ENCODE measurements at regions of chr5 and their contacts with region 1.

Region 1: GRCh38 chr5:174317259-174317894 is 271.9 kb downstream of the NSG2 start:
- DNase-seq: peak in 1 of 2 experiments; percentile 66
- H3K4me3 ChIP-seq: no peak overlapping the region
- H3K27ac ChIP-seq: no peak overlapping the region
- H3K4me1 ChIP-seq: peaks cover 0 to under 1% (median 0%) of the 10 kb centered on the region in 4 experiments; a peak in 1 of 7 replicates
- H3K27me3 ChIP-seq: peaks cover 0 to 10% (median 6%) of the 10 kb centered on the region in 4 experiments; a peak in 5 of 7 replicates
- CTCF ChIP-seq: peak; percentile 93 to 97 (median 95)
- EP300 ChIP-seq: no peak
- POLR2A ChIP-seq: no peak
- RAD21 ChIP-seq: peak; percentile 99 to 100

Region 2: DNA sequence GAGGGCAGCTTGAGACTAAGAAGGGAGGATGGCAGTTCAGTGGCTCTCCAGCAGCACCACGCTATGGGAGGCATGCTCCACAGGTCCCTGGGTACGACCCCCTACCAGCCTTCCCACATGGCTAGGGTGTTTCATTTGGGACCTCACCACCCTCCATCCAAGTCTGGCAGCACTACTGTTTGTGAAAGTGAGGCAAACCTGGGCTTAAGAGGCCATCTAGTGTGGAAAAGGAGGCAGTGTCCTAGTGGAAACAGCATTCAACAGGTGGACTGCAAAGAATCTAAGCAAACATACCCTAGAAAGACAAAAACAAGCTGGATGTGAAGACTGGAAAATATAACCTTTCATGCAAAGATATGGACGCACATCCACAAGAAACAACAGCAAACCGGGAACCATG is 333.2 kb before region 1 on chr5:
- CTCF ChIA-PET with region 1: interaction called, 28 read pairs
- POLR2A ChIA-PET with region 1: no interaction called
- DNase-seq: peak in 1 of 2 experiments; percentile 50
- H3K4me3 ChIP-seq: no peak overlapping the region
- H3K27ac ChIP-seq: no peak overlapping the region
- H3K4me1 ChIP-seq: peaks cover 4 to 8% (median 5%) of the 10 kb centered on the region in 4 experiments; a peak in 4 of 7 replicates
- H3K27me3 ChIP-seq: no peaks in the 10 kb centered on the region
- CTCF ChIP-seq: peak; percentile 8 to 87 (median 80)
- EP300 ChIP-seq: no peak
- POLR2A ChIP-seq: no peak
- RAD21 ChIP-seq: peak; percentile 96

Region 3: DNA sequence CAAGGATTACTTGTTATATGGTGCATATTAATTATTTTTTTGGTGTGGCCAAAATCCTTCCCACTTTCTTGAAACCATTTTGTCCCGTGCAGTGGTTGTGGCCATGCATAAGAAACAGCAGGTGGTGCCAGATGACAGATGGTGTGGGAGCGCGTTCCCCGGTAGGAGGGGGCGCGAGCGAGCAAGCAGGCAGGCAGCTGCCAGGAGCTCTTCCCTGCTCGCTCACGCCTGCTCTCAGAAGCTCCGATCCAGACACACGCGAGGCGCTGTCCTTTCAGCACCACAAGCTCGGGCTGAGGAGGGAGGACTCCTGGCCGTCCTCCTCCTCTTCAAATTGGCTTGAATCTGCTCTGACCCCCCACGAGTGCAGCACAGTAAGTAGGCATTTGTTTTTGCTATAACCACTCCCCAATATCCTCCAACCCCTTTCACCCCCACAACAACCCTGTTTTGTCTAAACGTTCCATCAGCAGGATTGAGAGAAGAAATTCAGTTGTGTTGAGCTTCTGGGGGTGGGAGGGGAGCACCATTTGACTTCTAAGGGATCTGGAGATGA is 271.8 kb before region 1 on chr5 and contains the start of gene NSG2:
- CTCF ChIA-PET with region 1: interaction called, 187 read pairs
- POLR2A ChIA-PET with region 1: interaction called, 9 read pairs
- DNase-seq: peak; percentile 83 to 87
- H3K4me3 ChIP-seq: no peak within 1 kb of the TSS
- H3K27ac ChIP-seq: no peak within 1 kb of the TSS
- H3K4me1 ChIP-seq: no peaks in the 10 kb centered on the region
- H3K27me3 ChIP-seq: no peaks in the 10 kb centered on the region
- CTCF ChIP-seq: peak; percentile 80 to 95 (median 81)
- EP300 ChIP-seq: no peak
- POLR2A ChIP-seq: no peak
- RAD21 ChIP-seq: peak; percentile 98 to 100
- total RNA-seq, gene NSG2: 0.34 and 0.78 TPM in 2 replicates

Region 4: GRCh38 chr5:174097518-174098185 is 219.7 kb before region 1 on chr5:
- CTCF ChIA-PET with region 1: interaction called, 19 read pairs
- POLR2A ChIA-PET with region 1: no interaction called
- DNase-seq: no peak
- H3K4me3 ChIP-seq: no peak overlapping the region
- H3K27ac ChIP-seq: no peak overlapping the region; the same call in 1 of the 2 replicates
- H3K4me1 ChIP-seq: no peaks in the 10 kb centered on the region
- H3K27me3 ChIP-seq: no peaks in the 10 kb centered on the region
- CTCF ChIP-seq: no peak
- EP300 ChIP-seq: no peak
- POLR2A ChIP-seq: no peak
- RAD21 ChIP-seq: no peak

Region 5: DNA sequence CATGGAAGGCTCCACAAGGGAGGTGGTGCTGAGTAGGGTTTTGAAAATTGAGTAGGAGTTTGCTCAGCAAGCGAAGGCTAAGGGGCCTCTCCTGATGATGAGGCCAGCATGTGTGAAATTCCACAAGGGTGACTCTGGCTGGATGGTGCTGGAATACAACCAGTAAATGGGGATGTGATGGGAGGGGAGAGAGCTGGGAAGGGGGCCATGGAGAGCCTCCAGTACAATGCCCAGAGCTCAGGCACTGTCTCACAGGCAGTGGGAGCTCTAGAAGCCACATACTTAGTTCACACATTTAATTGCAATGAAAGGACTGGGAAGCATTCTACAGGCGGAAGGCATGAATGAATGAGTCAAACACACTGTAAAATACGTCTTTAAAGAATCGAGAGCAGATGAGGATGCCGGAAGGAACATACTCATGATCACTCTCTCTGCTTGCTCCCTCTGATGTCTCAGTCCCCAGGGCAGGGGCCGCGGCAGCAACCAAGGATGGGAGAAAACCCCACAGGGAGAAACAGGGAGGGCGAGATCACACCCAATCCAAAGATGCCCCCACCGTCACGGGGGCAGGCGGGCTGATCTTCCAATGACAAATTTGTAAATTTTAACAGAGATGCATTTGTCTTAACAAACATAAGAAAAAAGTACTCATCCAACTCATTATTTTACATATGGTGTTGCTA is 10.9 kb before region 1 on chr5:
- CTCF ChIA-PET with region 1: interaction called, 22 read pairs
- POLR2A ChIA-PET with region 1: no interaction called
- DNase-seq: no peak
- H3K4me3 ChIP-seq: no peak overlapping the region
- H3K27ac ChIP-seq: no peak overlapping the region
- H3K4me1 ChIP-seq: peaks cover 0 to 7% (median 4%) of the 10 kb centered on the region in 4 experiments; a peak in 4 of 7 replicates
- H3K27me3 ChIP-seq: no peaks in the 10 kb centered on the region
- CTCF ChIP-seq: no peak
- EP300 ChIP-seq: no peak
- POLR2A ChIP-seq: no peak
- RAD21 ChIP-seq: no peak

Region 6: DNA sequence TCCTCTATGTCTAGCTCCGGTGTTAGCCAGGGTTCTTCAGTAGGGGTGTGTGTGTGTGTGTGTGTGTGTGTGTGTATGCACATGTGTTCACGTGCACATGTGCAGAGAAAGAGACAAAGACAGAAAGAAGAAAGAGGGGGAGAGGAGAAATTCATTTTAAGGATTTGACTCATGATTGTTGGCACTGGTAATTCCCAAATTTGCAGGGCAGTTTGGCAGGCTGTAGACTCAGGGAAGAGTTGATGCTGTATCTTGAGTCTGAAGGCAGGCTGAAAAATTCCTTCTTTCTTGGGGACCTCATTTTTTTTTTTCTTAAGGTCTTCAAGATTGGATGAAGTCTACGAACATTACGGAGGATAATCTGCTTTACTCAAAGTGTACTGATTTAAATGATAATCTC is 63.9 kb after region 1 on chr5:
- CTCF ChIA-PET with region 1: no interaction called
- POLR2A ChIA-PET with region 1: no interaction called
- DNase-seq: no peak
- H3K4me3 ChIP-seq: no peak overlapping the region
- H3K27ac ChIP-seq: no peak overlapping the region
- H3K4me1 ChIP-seq: peaks cover 0 to 2% (median 0%) of the 10 kb centered on the region in 4 experiments; a peak in 1 of 7 replicates
- H3K27me3 ChIP-seq: no peaks in the 10 kb centered on the region
- CTCF ChIP-seq: no peak
- EP300 ChIP-seq: no peak
- POLR2A ChIP-seq: no peak
- RAD21 ChIP-seq: no peak

Region 7: DNA sequence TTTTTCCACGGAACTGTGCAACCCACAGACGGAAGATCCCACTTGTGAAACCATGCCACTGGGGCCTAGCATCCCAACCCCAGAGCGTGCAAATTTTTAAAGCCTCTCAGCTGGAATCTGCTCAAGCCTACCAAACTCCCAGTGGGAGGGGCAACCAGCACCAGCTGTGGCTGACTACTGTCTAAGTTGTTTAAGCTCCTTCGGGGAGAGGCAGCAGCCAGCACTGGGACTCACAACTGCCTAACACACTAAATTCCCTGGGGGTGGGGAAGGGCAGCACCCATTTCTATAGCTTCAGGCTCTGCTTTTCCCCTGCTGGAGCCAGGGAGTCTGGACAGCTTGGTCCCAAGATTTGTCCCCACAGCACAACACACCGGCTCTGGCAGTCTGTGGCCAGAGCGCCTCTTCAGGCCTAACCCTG is 119.4 kb after region 1 on chr5:
- CTCF ChIA-PET with region 1: no interaction called
- POLR2A ChIA-PET with region 1: no interaction called
- DNase-seq: no peak
- H3K4me3 ChIP-seq: no peak overlapping the region
- H3K27ac ChIP-seq: no peak overlapping the region
- H3K4me1 ChIP-seq: no peaks in the 10 kb centered on the region
- H3K27me3 ChIP-seq: no peaks in the 10 kb centered on the region; a peak in 1 of 7 replicates
- CTCF ChIP-seq: no peak
- EP300 ChIP-seq: no peak
- POLR2A ChIP-seq: no peak
- RAD21 ChIP-seq: no peak

Region 8: DNA sequence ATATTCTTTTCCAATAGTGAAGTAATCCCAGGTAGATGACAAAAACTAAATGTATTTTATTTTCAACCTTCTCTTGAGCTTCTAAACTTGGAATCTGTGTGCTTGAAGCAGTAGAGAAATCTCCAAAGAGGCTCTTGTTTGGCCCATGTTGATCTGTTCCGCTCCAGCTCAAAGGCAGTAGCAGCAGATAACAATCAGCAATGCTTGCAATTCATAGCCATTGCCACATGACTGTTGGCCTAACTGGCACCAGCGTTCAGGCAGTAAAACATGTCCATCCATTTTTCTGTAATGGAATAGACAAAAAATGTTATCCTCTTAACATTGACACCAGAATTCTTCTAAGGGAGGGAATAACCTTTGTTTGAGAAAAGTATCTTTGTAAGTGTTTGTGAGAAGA is 136.3 kb after region 1 on chr5:
- CTCF ChIA-PET with region 1: no interaction called
- POLR2A ChIA-PET with region 1: no interaction called
- DNase-seq: no peak
- H3K4me3 ChIP-seq: no peak overlapping the region
- H3K27ac ChIP-seq: no peak overlapping the region
- H3K4me1 ChIP-seq: no peaks in the 10 kb centered on the region
- H3K27me3 ChIP-seq: no peaks in the 10 kb centered on the region
- CTCF ChIP-seq: no peak
- EP300 ChIP-seq: no peak
- POLR2A ChIP-seq: no peak
- RAD21 ChIP-seq: no peak